Adrenal gland (tissue), 19 donors: ENCODE measurements at regions of chr9 and their contacts with region 1.

Region 1: GRCh38 chr9:131478421-131478868 is 24.3 kb upstream of the POMT1 start:
- DNase-seq: peak in 6 of 7 donors; percentile 51 to 69 (median 57)
- H3K4me3 ChIP-seq: no peak overlapping the region
- H3K27ac ChIP-seq: no peak overlapping the region
- H3K4me1 ChIP-seq: no peaks in the 10 kb centered on the region
- H3K27me3 ChIP-seq: no peaks in the 10 kb centered on the region
- CTCF ChIP-seq: peak; percentile 15 to 53 (median 42)
- POLR2A ChIP-seq: no peak

Region 2: GRCh38 chr9:131349881-131350563 is 128.4 kb before region 1 on chr9:
- intact Hi-C with region 1: loop called in 1 of 2 experiments (anchors 5 kb)
- DNase-seq: peak; percentile 83 to 94 (median 93)
- H3K4me3 ChIP-seq: peak overlapping the region in 2 of 4 donors; percentile 28 to 40
- H3K27ac ChIP-seq: peak overlapping the region in 1 of 5 donors; percentile 42
- H3K4me1 ChIP-seq: peaks cover 0 to 10% of the 10 kb centered on the region in 2 donors
- H3K27me3 ChIP-seq: no peaks in the 10 kb centered on the region
- CTCF ChIP-seq: peak; percentile 79 to 96 (median 90)
- POLR2A ChIP-seq: no peak

Region 3: GRCh38 chr9:131382850-131383729 is 95.4 kb before region 1 on chr9:
- intact Hi-C with region 1: loop called in 1 of 2 experiments (anchors 10 kb)
- DNase-seq: peak in 6 of 7 donors; percentile 70 to 88 (median 78)
- H3K4me3 ChIP-seq: no peak overlapping the region
- H3K27ac ChIP-seq: peak overlapping the region; percentile 38 to 84 (median 78)
- H3K4me1 ChIP-seq: peaks cover 0 to 8% of the 10 kb centered on the region in 2 donors
- H3K27me3 ChIP-seq: no peaks in the 10 kb centered on the region
- CTCF ChIP-seq: no peak
- POLR2A ChIP-seq: peak in 1 of 2 donors; percentile 63

Region 4: GRCh38 chr9:131393622-131394463 is 84.6 kb before region 1 on chr9 and contains the start of gene PRRC2B:
- intact Hi-C with region 1: loop called (anchors 10 kb)
- DNase-seq: peak; percentile 83 to 90 (median 87)
- H3K4me3 ChIP-seq: peak within 1 kb of the TSS; percentile 1 to 97 (median 44)
- H3K27ac ChIP-seq: peak within 1 kb of the TSS; percentile 81 to 99 (median 94)
- H3K4me1 ChIP-seq: peaks cover 35 to 50% of the 10 kb centered on the region in 2 donors
- H3K27me3 ChIP-seq: no peaks in the 10 kb centered on the region
- CTCF ChIP-seq: peak in 3 of 6 experiments; percentile 37 to 60 (median 56)
- POLR2A ChIP-seq: peak in 1 of 2 donors; percentile 69
- total RNA-seq, gene PRRC2B: 42.3 to 255 (median 152) TPM

Region 5: DNA sequence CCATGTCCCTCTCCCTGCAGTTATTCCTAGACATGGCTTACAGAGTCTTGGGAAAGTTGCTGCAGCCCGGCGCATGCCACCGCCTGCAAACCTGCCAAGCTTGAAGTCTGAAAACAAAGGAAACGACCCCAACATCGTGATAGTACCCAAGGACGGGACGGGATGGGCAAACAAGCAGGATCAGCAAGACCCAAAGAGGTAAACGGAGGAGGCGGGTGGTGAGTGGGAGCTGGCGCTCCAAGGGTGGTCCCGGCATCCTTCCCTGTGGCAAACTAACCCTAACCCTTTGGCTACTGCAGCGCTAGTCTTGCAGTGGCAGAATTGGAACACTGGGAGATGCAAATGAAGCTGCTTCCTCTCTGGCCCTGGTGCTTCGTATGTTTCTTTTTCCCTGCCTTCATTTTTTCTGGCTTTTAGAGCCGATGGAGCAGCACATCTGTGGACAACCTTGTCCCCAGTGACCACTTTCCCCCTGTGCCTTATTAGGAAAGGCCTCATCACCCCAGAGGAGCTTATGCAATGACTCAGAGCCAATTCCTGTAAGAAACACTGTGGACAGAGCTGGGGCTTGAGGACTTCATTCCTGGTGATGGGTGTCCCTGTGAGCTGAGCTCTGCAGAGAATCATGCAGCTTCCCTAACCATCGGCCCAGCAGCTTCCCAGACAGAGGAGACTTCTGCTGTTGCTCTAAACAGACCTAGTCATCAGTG is 45.7 kb before region 1 on chr9:
- intact Hi-C with region 1: no loop called
- DNase-seq: peak in 5 of 7 donors; percentile 47 to 81 (median 71)
- H3K4me3 ChIP-seq: no peak overlapping the region
- H3K27ac ChIP-seq: peak overlapping the region in 4 of 5 donors; percentile 19 to 71 (median 44)
- H3K4me1 ChIP-seq: peaks cover 26 to 42% of the 10 kb centered on the region in 2 donors
- H3K27me3 ChIP-seq: no peaks in the 10 kb centered on the region
- CTCF ChIP-seq: no peak
- POLR2A ChIP-seq: peak in 1 of 2 donors; percentile 20

Region 6: GRCh38 chr9:131635285-131635684 is 156.8 kb after region 1 on chr9:
- intact Hi-C with region 1: no loop called
- DNase-seq: peak; percentile 90 to 98 (median 95)
- H3K4me3 ChIP-seq: no peak overlapping the region
- H3K27ac ChIP-seq: peak overlapping the region; percentile 71 to 93 (median 90)
- H3K4me1 ChIP-seq: peaks cover 6 to 16% of the 10 kb centered on the region in 2 donors
- H3K27me3 ChIP-seq: no peaks in the 10 kb centered on the region
- CTCF ChIP-seq: peak in 4 of 6 experiments; percentile 4 to 27 (median 23)
- POLR2A ChIP-seq: peak; percentile 58 to 86